Activated CD8-positive, alpha-beta memory T cell treated with anti-CD3 and anti-CD28 coated beads, Interleukin-2, amount 10 ng/mL, durations not matched to agents 7 days and 5 days (primary cell): ENCODE measurements at regions of chr1 and their contacts with region 1.

Region 1: GRCh38 chr1:36187800-36188593 is 32.0 kb downstream of the MAP7D1 start:
- DNase-seq: peak; percentile 89
- ATAC-seq: peak; percentile 97
- H3K4me3 Mint-ChIP-seq: no peak overlapping the region
- H3K27ac Mint-ChIP-seq: peak overlapping the region; percentile 37
- H3K4me1 Mint-ChIP-seq: peaks cover 4% of the 10 kb centered on the region
- H3K27me3 Mint-ChIP-seq: no peaks in the 10 kb centered on the region

Region 2: GRCh38 chr1:36099681-36100341 is 88.2 kb before region 1 on chr1:
- CTCF ChIA-PET with region 1: interaction called, 29 read pairs
- DNase-seq: peak; percentile 85
- ATAC-seq: peak; percentile 93
- H3K4me3 Mint-ChIP-seq: no peak overlapping the region
- H3K27ac Mint-ChIP-seq: no peak overlapping the region
- H3K4me1 Mint-ChIP-seq: peaks cover 4% of the 10 kb centered on the region
- H3K27me3 Mint-ChIP-seq: no peaks in the 10 kb centered on the region

Region 3: GRCh38 chr1:36118447-36119204 is 69.4 kb before region 1 on chr1:
- CTCF ChIA-PET with region 1: no interaction called
- DNase-seq: no peak
- ATAC-seq: no peak
- H3K4me3 Mint-ChIP-seq: no peak overlapping the region
- H3K27ac Mint-ChIP-seq: no peak overlapping the region
- H3K4me1 Mint-ChIP-seq: peaks cover 5% of the 10 kb centered on the region
- H3K27me3 Mint-ChIP-seq: peaks cover 21% of the 10 kb centered on the region

Region 4: GRCh38 chr1:36155408-36156328 is 32.3 kb before region 1 on chr1 and contains the start of gene MAP7D1:
- CTCF ChIA-PET with region 1: interaction called, 145 read pairs
- DNase-seq: peak; percentile 87
- ATAC-seq: peak; percentile 73
- H3K4me3 Mint-ChIP-seq: peak within 1 kb of the TSS; percentile 91
- H3K27ac Mint-ChIP-seq: peak within 1 kb of the TSS; percentile 92
- H3K4me1 Mint-ChIP-seq: peaks cover 68% of the 10 kb centered on the region
- H3K27me3 Mint-ChIP-seq: no peaks in the 10 kb centered on the region
- total RNA-seq, gene MAP7D1: 238 to 252 TPM

Region 5: GRCh38 chr1:36168514-36168913 is 19.5 kb before region 1 on chr1:
- CTCF ChIA-PET with region 1: interaction called, 17 read pairs
- DNase-seq: no peak
- ATAC-seq: no peak
- H3K4me3 Mint-ChIP-seq: no peak overlapping the region
- H3K27ac Mint-ChIP-seq: peak overlapping the region; percentile 37
- H3K4me1 Mint-ChIP-seq: peaks cover 24% of the 10 kb centered on the region
- H3K27me3 Mint-ChIP-seq: no peaks in the 10 kb centered on the region

Region 6: DNA sequence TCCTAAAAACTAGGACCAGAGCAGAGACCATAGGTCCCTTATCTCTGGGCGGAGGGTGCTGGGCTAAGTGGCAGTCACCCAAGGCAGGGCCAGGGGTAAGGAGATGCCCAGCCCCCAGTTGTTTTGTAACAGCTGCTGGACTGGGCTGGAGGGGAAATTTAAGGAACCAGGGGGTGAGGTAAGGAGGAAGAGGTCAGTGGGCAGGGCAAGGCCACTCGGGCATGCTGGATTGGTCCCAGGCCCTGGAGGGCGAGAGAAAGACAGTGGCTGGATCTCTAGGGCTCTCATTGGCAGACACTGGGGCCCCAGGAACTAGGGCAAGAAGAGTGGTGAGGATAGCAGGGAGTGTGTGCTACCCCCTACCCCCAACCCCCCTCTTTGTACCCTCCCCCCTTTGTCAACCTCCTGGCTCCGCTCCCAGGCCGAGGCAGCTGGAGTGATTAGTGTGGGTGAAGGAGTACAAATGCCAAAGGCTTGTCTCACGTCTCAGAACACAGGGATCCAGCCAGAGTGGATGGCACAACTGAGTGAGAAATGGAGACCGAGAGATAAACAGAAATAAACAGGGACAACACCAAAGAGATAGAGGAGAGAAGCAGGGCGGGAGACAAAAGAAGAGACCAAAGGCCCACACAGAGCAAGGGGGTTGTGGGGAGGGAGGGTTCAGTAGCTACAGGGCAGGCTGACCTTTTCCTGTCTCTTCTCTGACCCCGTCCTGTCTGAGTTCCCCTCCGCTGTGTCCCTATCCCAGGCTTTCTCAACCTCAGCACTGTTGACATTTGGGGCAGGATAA is 15.8 kb after region 1 on chr1:
- CTCF ChIA-PET with region 1: no interaction called
- DNase-seq: no peak
- ATAC-seq: no peak
- H3K4me3 Mint-ChIP-seq: no peak overlapping the region
- H3K27ac Mint-ChIP-seq: no peak overlapping the region
- H3K4me1 Mint-ChIP-seq: peaks cover 11% of the 10 kb centered on the region
- H3K27me3 Mint-ChIP-seq: peaks cover 7% of the 10 kb centered on the region

Region 7: DNA sequence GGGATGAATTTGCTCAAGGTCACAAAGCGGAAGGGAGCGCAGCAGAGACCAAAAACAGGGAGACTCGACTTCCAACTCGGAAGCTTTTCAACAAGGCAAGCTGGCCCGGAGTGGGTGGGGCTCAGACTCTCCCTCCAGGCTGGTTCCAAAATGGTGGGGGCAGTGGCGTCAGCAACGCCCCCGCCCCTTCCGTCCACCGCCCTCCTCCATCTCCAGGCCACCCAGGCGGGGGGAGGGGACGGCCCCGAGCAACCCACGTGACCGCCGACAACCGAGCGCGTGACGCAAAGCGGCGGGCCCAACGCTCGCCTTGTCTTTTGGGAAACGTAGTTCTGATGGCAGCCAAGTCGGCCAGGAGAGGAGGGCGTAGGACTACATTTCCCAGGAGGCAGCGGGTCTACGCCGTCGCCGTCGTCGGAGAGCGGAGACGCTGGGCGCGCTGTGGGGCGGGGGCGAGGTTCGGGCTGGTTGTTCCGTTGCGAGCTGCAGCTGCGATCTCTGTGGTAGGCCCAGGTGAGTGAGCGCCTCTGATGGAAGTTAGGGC is 36.1 kb after region 1 on chr1 and contains the start of gene THRAP3:
- CTCF ChIA-PET with region 1: interaction called, 17 read pairs
- DNase-seq: peak; percentile 100
- ATAC-seq: peak; percentile 92
- H3K4me3 Mint-ChIP-seq: peak within 1 kb of the TSS; percentile 94
- H3K27ac Mint-ChIP-seq: peak within 1 kb of the TSS; percentile 100
- H3K4me1 Mint-ChIP-seq: peaks cover 27% of the 10 kb centered on the region
- H3K27me3 Mint-ChIP-seq: no peaks in the 10 kb centered on the region
- total RNA-seq, gene THRAP3: 129 to 166 TPM

Region 8: DNA sequence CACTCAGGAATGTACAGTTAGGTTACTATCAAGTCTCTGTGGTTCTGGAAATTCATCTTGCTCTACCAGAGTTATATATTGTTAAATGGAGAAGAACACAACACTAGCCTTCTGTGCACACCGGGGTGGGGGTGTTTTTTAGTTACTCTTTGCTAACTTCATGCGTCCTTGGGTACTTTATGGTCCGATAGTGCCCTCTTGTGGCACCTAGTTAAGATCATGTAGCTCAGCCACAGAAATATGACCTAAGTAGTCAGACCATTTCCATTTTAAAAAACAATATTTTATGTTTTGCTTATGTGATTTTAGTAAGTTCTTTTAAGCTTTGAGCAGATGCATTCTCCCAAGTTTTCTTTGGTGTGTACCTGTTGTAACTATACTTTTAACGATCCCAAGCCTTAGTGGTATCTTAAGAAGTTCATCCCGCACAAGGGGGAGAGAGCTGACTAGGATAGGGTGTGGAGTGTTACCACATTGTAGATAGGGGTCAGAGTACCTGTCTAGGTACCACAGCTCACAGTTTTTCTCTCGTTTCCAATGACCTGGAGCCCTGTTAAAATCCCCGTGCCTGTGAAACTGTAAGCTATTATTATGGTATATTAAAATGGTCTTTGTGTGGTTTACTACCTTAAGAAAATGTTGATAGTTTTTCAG is 97.6 kb after region 1 on chr1:
- CTCF ChIA-PET with region 1: interaction called, 20 read pairs
- DNase-seq: peak; percentile 79
- ATAC-seq: peak; percentile 93
- H3K4me3 Mint-ChIP-seq: no peak overlapping the region
- H3K27ac Mint-ChIP-seq: peak overlapping the region; percentile 68
- H3K4me1 Mint-ChIP-seq: peaks cover 17% of the 10 kb centered on the region
- H3K27me3 Mint-ChIP-seq: no peaks in the 10 kb centered on the region